Activated T-helper 2 cell treated with anti-CD3 and anti-CD28 coated beads, Interferon-gamma antibody, Interleukin-2, Interleukin-4, amounts not matched to agents 10 μg/mL and 5 μg/mL and 100 μg/mL, durations not matched to agents 14 hours and 24 hours and 36 hours (primary cell): ENCODE measurements at regions of chr6 and their contacts with region 1.

Region 1: DNA sequence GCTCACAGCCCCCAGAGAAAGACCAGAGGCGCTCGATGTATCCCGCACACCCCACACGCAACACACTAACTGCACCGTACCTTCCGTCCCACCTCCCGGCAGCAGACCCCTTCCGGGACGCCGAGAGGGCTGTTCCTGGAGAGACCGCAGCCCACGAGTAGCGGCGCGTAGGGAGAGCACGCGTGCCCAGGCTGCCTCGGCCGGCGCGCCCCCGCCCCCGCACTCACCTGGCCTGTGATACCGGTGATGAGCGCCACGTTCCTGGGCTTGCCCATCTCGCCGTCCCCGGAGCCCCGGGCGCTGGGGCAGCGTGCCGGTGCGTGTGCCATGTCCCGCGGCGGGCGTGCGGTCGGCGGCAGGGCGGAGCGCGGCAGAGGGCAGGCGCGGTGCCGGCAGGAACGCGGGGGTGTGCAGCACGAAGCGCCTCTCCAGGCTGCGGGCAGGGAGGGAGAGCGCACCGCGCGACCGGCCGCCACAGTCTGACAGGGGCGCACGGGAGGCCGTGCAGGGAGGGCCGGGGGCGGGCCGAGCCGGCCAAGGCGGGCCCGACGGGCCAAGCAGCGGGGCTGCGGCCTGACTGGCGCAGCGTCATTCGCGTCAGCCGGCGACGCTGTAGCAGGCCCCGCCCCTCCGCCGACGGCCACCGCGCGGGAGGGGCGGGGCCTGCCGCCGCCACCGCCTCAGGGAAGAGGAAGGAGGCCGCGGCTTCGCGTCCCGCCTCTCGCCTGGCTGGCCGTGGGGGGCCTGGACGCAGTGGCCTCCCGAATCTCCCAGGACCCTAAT is at the start of gene GMDS:
- DNase-seq: peak; percentile 79
- H3K4me3 Mint-ChIP-seq: peak within 1 kb of the TSS; percentile 90
- H3K27ac Mint-ChIP-seq: peak within 1 kb of the TSS; percentile 94
- H3K4me1 Mint-ChIP-seq: peaks cover 65% of the 10 kb centered on the region
- H3K27me3 Mint-ChIP-seq: no peaks in the 10 kb centered on the region
- total RNA-seq, gene GMDS: 35.7 and 36.9 TPM in 2 replicates

Region 2: GRCh38 chr6:1971612-1972011 is 273.7 kb before region 1 on chr6:
- intact Hi-C with region 1: no loop called
- DNase-seq: no peak
- H3K4me3 Mint-ChIP-seq: no peak overlapping the region
- H3K27ac Mint-ChIP-seq: no peak overlapping the region
- H3K4me1 Mint-ChIP-seq: peaks cover 2% of the 10 kb centered on the region
- H3K27me3 Mint-ChIP-seq: no peaks in the 10 kb centered on the region

Region 3: DNA sequence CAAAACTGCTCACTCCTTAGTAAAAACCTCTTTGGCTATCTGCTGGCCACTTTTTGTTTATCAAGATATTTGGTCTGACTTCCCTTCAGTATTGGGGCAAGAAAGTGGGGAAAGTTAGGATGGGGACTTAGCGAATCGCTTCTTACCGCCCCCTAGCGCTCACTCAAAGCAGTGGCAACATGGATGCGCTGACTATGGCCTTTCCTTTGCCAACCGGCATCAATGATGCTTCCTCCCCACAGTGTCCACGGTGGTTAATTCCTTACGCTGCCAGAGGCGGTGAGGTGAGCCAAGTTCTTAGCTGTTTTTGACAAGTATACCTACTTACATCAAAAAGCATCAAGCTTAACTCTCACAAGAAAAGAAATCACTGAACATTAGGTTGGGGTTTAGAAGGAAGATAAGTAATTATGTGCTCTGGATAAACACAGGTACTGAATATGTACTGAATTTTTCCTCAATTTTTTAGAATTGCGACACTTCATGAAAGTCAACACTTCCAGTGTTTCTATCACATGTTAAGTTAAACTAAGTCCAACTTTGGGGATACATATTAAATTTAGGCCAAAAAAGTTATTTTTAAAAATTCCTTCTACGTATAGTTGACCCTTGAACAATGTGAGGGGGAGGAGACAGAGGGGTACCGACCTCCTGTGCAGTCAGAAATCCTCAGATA is 86.6 kb before region 1 on chr6:
- intact Hi-C with region 1: loop called (anchors 5 kb)
- DNase-seq: no peak
- H3K4me3 Mint-ChIP-seq: no peak overlapping the region
- H3K27ac Mint-ChIP-seq: no peak overlapping the region
- H3K4me1 Mint-ChIP-seq: peaks cover 41% of the 10 kb centered on the region
- H3K27me3 Mint-ChIP-seq: peaks cover 18% of the 10 kb centered on the region

Region 4: GRCh38 chr6:2563635-2564034 is 318.4 kb after region 1 on chr6:
- intact Hi-C with region 1: loop called (anchors 10 kb)
- DNase-seq: no peak
- H3K4me3 Mint-ChIP-seq: no peak overlapping the region
- H3K27ac Mint-ChIP-seq: no peak overlapping the region
- H3K4me1 Mint-ChIP-seq: peaks cover 11% of the 10 kb centered on the region
- H3K27me3 Mint-ChIP-seq: peaks cover 84% of the 10 kb centered on the region